ENCODE measurements at regions of chr21 and their contacts with region 1.

Region 1: GRCh38 chr21:17699524-17700189 is 87.0 kb upstream of the BTG3 start:
- DNase-seq: no peak
- ATAC-seq: no peak
- H3K4me3 Mint-ChIP-seq: no peak overlapping the region
- H3K27ac Mint-ChIP-seq: no peak overlapping the region
- H3K4me1 Mint-ChIP-seq: no peaks in the 10 kb centered on the region
- H3K27me3 Mint-ChIP-seq: no peaks in the 10 kb centered on the region
- CTCF ChIP-seq: no peak

Region 2: GRCh38 chr21:17741806-17742550 is 42.3 kb after region 1 on chr21:
- CTCF ChIA-PET with region 1: no interaction called
- POLR2A ChIA-PET with region 1: no interaction called
- intact Hi-C with region 1: loop called (anchors 10 kb)
- DNase-seq: no peak
- ATAC-seq: no peak
- H3K4me3 Mint-ChIP-seq: no peak overlapping the region
- H3K27ac Mint-ChIP-seq: no peak overlapping the region
- H3K4me1 Mint-ChIP-seq: no peaks in the 10 kb centered on the region
- H3K27me3 Mint-ChIP-seq: no peaks in the 10 kb centered on the region
- CTCF ChIP-seq: no peak

Measured in activated B cell treated with CpG ODN at 0.5 μM for 24 hours (primary cell).